IMR-90 (cell line): ENCODE measurements at regions of chr3 and their contacts with region 1.

Region 1: GRCh38 chr3:48157950-48158376 is 30.3 kb downstream of the CDC25A start:
- DNase-seq: peak; percentile 70
- ATAC-seq: peak; percentile 70
- H3K4me3 ChIP-seq: no peak overlapping the region
- H3K27ac ChIP-seq: no peak overlapping the region
- H3K4me1 ChIP-seq: peaks cover 4% of the 10 kb centered on the region
- H3K27me3 ChIP-seq: no peaks in the 10 kb centered on the region
- CTCF ChIP-seq: peak; percentile 81
- POLR2A ChIP-seq: no peak
- RAD21 ChIP-seq: peak; percentile 78

Region 2: GRCh38 chr3:47836986-47837385 is 321.0 kb before region 1 on chr3:
- CTCF ChIA-PET with region 1: interaction called, 11 read pairs
- POLR2A ChIA-PET with region 1: no interaction called
- dilution Hi-C with region 1: no loop called
- in situ Hi-C with region 1: loop called (anchors 5 kb)
- intact Hi-C with region 1: loop called (anchors 1 kb)
- DNase-seq: no peak
- ATAC-seq: no peak
- H3K4me3 ChIP-seq: no peak overlapping the region
- H3K27ac ChIP-seq: no peak overlapping the region
- H3K4me1 ChIP-seq: no peaks in the 10 kb centered on the region
- H3K27me3 ChIP-seq: no peaks in the 10 kb centered on the region
- CTCF ChIP-seq: no peak
- POLR2A ChIP-seq: no peak
- RAD21 ChIP-seq: no peak

Region 3: DNA sequence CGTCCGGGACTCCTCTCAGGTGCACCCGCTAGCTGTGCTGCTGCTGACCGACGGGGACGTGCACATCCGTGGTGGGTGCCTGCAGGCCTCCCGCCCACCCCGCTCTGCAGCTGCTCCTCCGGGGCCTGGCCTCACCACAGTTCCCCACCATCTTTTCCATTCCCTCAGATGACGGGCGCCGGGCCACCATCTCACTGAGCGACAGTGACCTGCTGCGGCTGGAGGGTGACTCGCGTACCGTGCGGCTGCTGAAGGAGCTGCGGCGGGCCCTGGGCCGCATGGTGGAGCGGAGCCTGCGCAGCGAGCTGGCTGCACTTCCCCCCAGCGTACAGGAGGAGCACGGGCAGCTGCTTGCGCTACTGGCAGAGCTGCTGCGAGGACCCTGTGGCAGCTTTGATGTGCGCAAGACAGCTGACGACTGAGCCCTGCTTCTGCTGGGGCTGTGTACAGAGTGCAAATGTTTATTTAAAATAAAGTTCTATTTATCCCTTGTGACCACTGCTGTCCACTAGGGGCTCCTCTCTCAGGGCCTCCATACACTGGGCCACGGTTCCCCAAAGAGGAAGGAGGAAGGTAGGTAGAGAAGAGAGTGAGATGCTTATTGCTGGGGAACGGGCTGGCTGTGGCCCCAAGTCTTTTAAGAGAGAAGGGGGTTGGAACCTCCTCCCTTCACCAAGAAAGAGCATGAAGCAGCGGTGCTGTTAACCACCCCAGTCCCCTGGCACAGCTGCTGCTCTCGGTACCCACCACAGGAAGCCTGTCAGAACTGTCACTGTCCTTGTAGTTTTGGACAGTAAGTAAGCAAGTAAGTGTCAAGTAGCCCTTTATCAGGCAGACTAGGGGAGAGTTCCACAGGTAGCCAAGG is 308.0 kb before region 1 on chr3:
- CTCF ChIA-PET with region 1: interaction called, 3 read pairs
- POLR2A ChIA-PET with region 1: no interaction called
- dilution Hi-C with region 1: no loop called
- in situ Hi-C with region 1: no loop called
- intact Hi-C with region 1: loop called (anchors 5 kb)
- DNase-seq: peak; percentile 49
- ATAC-seq: peak; percentile 79
- H3K4me3 ChIP-seq: no peak overlapping the region
- H3K27ac ChIP-seq: no peak overlapping the region
- H3K4me1 ChIP-seq: peaks cover 2% of the 10 kb centered on the region; the same call in 1 of the 2 replicates
- H3K27me3 ChIP-seq: no peaks in the 10 kb centered on the region
- CTCF ChIP-seq: peak; percentile 51
- POLR2A ChIP-seq: peak; percentile 26; the same call in 1 of the 2 replicates
- RAD21 ChIP-seq: peak; percentile 33; the same call in 1 of the 2 replicates